ENCODE measurements at regions of chr2 and their contacts with region 1.

Region 1: GRCh38 chr2:96554293-96555145 is 18.0 kb downstream of the ARID5A start:
- DNase-seq: peak; percentile 46 to 80 (median 69)
- H3K4me3 ChIP-seq: no peak overlapping the region
- H3K4me3 Mint-ChIP-seq: peak overlapping the region in 7 of 8 donors; percentile 15 to 69 (median 32)
- H3K27ac ChIP-seq: no peak overlapping the region
- H3K27ac Mint-ChIP-seq: peak overlapping the region in 4 of 7 donors; percentile 22 to 86 (median 82)
- H3K4me1 ChIP-seq: peaks cover 17% of the 10 kb centered on the region
- H3K4me1 Mint-ChIP-seq: peaks cover 1 to 32% (median 12%) of the 10 kb centered on the region in 4 donors
- H3K27me3 ChIP-seq: no peaks in the 10 kb centered on the region
- H3K27me3 Mint-ChIP-seq: no peaks in the 10 kb centered on the region

Region 2: GRCh38 chr2:96359310-96359709 is 195.2 kb before region 1 on chr2:
- CTCF ChIA-PET with region 1: no interaction called
- POLR2A ChIA-PET with region 1: interaction called, 4 read pairs
- intact Hi-C with region 1: loop called (anchors 1 kb)
- DNase-seq: peak in 4 of 5 donors; percentile 22 to 41 (median 38)
- H3K4me3 ChIP-seq: no peak overlapping the region
- H3K4me3 Mint-ChIP-seq: no peak overlapping the region
- H3K27ac ChIP-seq: peak overlapping the region; percentile 2
- H3K27ac Mint-ChIP-seq: peak overlapping the region; percentile 69 to 97 (median 93)
- H3K4me1 ChIP-seq: peaks cover 21% of the 10 kb centered on the region
- H3K4me1 Mint-ChIP-seq: peaks cover 13 to 20% (median 14%) of the 10 kb centered on the region in 4 donors
- H3K27me3 ChIP-seq: no peaks in the 10 kb centered on the region
- H3K27me3 Mint-ChIP-seq: no peaks in the 10 kb centered on the region

Region 3: GRCh38 chr2:96470636-96471035 is 83.9 kb before region 1 on chr2:
- CTCF ChIA-PET with region 1: no interaction called
- POLR2A ChIA-PET with region 1: no interaction called
- intact Hi-C with region 1: loop called (anchors 1 kb)
- DNase-seq: peak in 4 of 5 donors; percentile 9 to 32 (median 18)
- H3K4me3 ChIP-seq: no peak overlapping the region
- H3K4me3 Mint-ChIP-seq: peak overlapping the region in 3 of 8 donors; percentile 18 to 51 (median 42)
- H3K27ac ChIP-seq: no peak overlapping the region
- H3K27ac Mint-ChIP-seq: no peak overlapping the region
- H3K4me1 ChIP-seq: peaks cover 3% of the 10 kb centered on the region
- H3K4me1 Mint-ChIP-seq: peaks cover 0 to 4% (median 1%) of the 10 kb centered on the region in 4 donors
- H3K27me3 ChIP-seq: no peaks in the 10 kb centered on the region
- H3K27me3 Mint-ChIP-seq: peaks cover 5 to 7% of the 10 kb centered on the region in 2 donors

Region 4: GRCh38 chr2:96527286-96528005 is 27.1 kb before region 1 on chr2:
- CTCF ChIA-PET with region 1: interaction called, 169 read pairs
- POLR2A ChIA-PET with region 1: interaction called, 320 read pairs
- intact Hi-C with region 1: loop called (anchors 1 kb)
- DNase-seq: peak; percentile 47 to 63 (median 49)
- H3K4me3 ChIP-seq: peak overlapping the region; percentile 29 to 64
- H3K4me3 Mint-ChIP-seq: peak overlapping the region; percentile 80 to 86 (median 83)
- H3K27ac ChIP-seq: peak overlapping the region; percentile 55
- H3K27ac Mint-ChIP-seq: peak overlapping the region; percentile 68 to 93 (median 86)
- H3K4me1 ChIP-seq: peaks cover 74% of the 10 kb centered on the region
- H3K4me1 Mint-ChIP-seq: peaks cover 33 to 72% (median 54%) of the 10 kb centered on the region in 4 donors
- H3K27me3 ChIP-seq: no peaks in the 10 kb centered on the region
- H3K27me3 Mint-ChIP-seq: no peaks in the 10 kb centered on the region

Region 5: GRCh38 chr2:96541398-96542152 is 12.9 kb before region 1 on chr2:
- CTCF ChIA-PET with region 1: interaction called, 169 read pairs
- POLR2A ChIA-PET with region 1: interaction called, 320 read pairs
- intact Hi-C with region 1: loop called (anchors 1 kb)
- DNase-seq: no peak
- H3K4me3 ChIP-seq: no peak overlapping the region
- H3K4me3 Mint-ChIP-seq: peak overlapping the region in 2 of 8 donors; percentile 4 to 35
- H3K27ac ChIP-seq: no peak overlapping the region
- H3K27ac Mint-ChIP-seq: peak overlapping the region in 3 of 7 donors; percentile 18 to 48 (median 27)
- H3K4me1 ChIP-seq: peaks cover 77% of the 10 kb centered on the region
- H3K4me1 Mint-ChIP-seq: peaks cover 49 to 85% (median 68%) of the 10 kb centered on the region in 4 donors
- H3K27me3 ChIP-seq: no peaks in the 10 kb centered on the region
- H3K27me3 Mint-ChIP-seq: no peaks in the 10 kb centered on the region

Measured in CD4-positive, alpha-beta memory T cell (primary cell).